ENCODE measurements at regions of chr20 and their contacts with region 1.

Region 1: DNA sequence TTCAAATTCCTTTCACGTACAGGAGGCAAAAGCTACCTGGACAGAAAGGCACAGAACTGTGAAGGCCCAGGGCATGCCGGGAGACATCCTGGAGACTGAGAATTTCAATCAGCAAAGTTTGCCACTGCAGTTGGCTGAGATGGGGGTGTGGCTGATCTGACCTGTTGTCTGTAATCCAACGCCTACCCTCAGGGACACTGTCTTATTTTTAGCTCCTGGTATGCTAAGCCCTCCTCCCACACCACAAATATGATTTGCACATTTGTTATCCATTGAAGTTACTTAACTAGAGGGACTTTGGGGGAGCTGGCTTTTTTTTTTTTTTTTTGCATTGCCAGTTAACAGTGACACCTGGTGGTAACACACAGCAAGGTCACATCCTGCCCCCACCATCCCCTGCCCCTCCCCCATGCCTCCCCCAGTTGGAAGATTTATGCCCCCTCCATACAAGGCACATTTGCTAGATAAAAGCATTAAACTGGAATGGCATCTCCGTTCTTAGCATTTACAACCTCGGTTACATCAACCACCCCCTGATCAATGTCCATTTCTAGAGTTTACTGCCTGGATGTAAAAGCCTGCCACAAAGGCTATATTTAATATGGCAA is 40.4 kb downstream of the TTI1 start:
- H3K4me3 Mint-ChIP-seq: no peak overlapping the region
- H3K27ac Mint-ChIP-seq: no peak overlapping the region
- H3K4me1 Mint-ChIP-seq: peaks cover 31% of the 10 kb centered on the region
- H3K27me3 Mint-ChIP-seq: no peaks in the 10 kb centered on the region

Region 2: GRCh38 chr20:37564388-37565133 is 428.3 kb before region 1 on chr20:
- intact Hi-C with region 1: loop called (anchors 2 kb)
- H3K4me3 Mint-ChIP-seq: no peak overlapping the region
- H3K27ac Mint-ChIP-seq: no peak overlapping the region
- H3K4me1 Mint-ChIP-seq: peaks cover 16% of the 10 kb centered on the region
- H3K27me3 Mint-ChIP-seq: peaks cover 69% of the 10 kb centered on the region

Region 3: GRCh38 chr20:37864298-37864697 is 128.6 kb before region 1 on chr20:
- intact Hi-C with region 1: no loop called
- H3K4me3 Mint-ChIP-seq: no peak overlapping the region
- H3K27ac Mint-ChIP-seq: no peak overlapping the region
- H3K4me1 Mint-ChIP-seq: peaks cover 9% of the 10 kb centered on the region
- H3K27me3 Mint-ChIP-seq: no peaks in the 10 kb centered on the region

Region 4: DNA sequence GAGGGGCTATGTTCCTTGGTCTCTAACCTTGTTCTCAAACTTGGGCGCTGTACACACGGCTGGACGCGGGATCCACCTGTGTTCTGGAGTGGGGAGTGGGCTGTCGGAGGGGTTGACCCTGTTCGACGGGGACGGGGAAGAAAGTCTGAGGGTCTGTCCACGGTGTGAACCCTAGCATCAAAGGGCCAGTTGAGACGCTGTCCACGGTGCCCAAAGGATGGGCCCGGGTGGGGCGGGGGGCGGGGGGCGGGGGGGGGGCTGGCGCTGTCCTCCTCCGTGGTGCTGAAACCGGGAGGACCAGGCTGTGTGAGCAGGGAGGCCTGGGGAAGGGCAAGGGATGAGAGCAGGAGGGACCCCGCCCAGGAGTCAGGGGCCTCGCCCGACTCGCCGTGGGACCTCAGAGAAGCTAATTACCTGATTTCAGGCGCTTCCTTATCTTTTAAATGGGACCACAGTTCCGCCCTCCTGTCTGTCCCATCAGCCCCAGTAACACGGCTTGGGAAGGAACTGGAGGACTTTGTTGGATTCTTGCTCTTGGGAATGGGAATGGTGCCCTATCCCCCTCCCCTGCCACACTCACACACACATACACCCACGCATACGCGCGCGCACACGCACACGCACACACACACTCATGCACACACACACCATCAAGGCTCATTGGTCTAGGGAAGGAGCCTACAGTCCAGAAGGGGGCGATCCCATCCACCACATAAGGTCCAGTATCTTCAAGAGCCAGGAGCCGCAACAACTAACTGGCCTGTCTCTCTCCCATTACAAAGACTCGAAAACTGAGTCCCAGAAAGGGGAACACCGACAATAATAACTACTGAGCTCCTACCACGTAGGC is 91.0 kb before region 1 on chr20:
- intact Hi-C with region 1: loop called (anchors 2 kb)
- H3K4me3 Mint-ChIP-seq: peak overlapping the region; percentile 32
- H3K27ac Mint-ChIP-seq: no peak overlapping the region
- H3K4me1 Mint-ChIP-seq: peaks cover 5% of the 10 kb centered on the region
- H3K27me3 Mint-ChIP-seq: peaks cover 74% of the 10 kb centered on the region

Measured in dendritic cell treated with granulocyte-macrophage colony-stimulating factor and Interleukin-4, amounts not matched to agents 40 ng/mL and 50 ng/mL, for 4 days (primary cell).